ENCODE measurements at regions of chr9 and their contacts with region 1.

Region 1: GRCh38 chr9:32251539-32251938 is 132.9 kb upstream of the ACO1 start:
- DNase-seq: peak; percentile 25
- ATAC-seq: peak; percentile 70 to 86

Region 2: DNA sequence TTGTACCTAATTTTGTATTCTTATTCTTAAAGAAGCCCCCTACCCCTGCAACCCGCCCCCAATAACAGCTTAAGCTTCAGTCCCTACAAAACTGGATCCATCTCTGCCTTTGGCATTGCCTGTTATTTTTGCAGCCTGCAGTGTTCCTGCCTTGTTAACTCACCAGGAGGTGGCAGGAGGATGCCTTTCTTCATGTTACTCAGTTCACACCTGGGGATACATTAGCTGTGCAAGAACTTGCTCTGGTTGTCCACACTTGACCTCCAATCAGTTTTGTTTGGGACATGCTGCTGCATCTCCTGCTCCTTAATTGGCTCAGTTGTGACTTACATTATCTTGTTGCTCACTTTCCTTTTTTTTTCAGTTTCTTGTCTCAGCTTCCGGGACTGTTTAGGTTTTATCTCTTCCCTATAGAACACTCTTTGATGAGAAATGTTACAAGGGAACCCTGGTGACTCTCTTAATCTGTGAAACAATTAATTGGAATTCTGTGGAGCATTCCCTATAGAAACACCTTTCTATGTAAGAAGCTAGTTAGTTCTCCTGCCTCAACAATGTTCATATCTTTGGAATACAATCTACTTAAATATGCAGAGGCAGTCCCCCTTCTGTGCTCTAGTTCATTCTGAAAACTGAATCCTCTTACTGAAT is 334.8 kb before region 1 on chr9:
- intact Hi-C with region 1: loop called in 1 of 2 experiments (anchors 10 kb)
- DNase-seq: no peak
- ATAC-seq: no peak

Measured in left cardiac atrium (tissue), 4 donors.